ENCODE measurements at regions of chr17 and their contacts with region 1.

Region 1: DNA sequence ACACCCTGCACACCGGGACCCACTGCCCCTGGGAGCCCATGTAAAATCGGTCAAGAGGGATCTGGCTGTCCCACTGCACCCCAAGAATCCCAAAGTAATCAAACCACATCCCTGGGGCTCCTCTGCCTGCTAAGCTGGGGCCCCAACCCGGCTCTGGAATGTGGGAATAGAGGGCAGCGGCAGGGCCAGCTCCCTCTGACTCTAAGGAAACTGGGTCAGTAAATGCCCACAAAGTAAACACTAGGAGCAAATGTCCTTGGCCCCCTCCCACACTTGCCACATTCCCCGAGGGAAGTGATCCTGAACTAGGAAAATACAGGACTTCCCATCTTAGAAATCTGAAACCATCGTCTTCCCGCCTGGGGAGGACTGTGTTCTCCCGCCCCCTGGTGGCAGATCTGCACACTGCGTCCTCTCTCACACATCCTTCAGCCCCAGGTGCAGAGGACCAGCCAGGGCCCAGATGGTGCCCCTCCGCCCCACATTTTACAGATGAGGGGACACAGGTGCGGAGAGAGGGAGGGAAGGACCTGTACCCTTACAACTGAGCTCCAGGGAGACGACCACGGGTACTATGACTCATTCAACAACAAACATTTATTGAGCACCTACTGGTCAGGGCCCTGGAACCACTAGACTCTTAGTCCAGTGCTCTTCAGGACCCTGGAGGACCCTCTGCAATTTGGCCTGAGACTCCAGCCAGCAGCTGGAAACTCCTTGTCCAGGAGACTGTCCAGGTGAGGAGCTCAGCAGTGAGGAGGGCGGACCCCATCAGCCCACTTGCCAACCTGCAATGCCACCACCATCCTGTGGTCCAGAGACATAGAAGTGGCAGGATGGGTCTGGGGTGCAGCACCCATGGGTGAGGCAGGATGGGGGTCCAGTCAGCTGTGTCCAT is 10.1 kb downstream of the P3H4 start:
- DNase-seq: peak; percentile 80
- H3K4me3 Mint-ChIP-seq: no peak overlapping the region
- H3K27ac Mint-ChIP-seq: no peak overlapping the region
- H3K4me1 Mint-ChIP-seq: peaks cover 11% of the 10 kb centered on the region
- H3K27me3 Mint-ChIP-seq: peaks cover 14% of the 10 kb centered on the region

Region 2: DNA sequence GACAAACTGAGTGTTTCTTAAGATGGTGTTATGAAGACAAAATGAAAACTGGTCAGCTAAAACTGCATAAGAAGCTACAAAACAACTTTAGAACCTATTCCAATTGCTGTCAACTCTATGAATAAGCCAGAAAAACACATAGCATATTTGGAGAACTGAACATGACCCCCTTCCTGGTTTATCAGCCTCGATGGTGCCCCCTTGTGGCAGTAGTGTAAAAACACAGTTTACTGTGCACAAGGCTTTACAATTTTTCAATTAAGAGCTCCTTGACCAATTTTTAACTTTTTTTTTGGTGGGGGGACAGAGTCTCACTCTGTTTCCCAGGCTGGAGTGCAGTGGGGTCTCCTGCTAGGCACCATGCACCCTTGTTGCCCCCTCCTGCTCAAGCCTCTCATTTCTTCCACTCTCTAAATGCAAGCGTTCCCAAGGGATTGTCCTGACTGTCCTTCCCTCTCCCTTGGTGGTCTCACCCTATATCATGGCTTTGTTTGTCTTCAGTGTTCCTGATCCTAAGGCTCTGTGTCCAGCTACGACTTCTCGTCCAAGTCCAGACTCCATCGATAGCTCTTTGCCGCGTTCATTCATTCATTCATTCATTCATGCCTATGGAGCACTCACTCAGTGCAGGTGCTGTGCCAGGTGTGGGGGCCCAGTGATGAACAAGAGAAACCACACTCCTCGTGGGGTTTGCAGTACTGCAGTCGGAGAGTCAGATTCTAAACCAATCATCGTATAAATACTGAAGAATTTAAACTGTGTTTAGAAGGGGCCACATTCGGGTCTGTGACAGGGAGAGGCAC is 105.5 kb before region 1 on chr17:
- CTCF ChIA-PET with region 1: no interaction called
- DNase-seq: peak; percentile 86
- H3K4me3 Mint-ChIP-seq: no peak overlapping the region
- H3K27ac Mint-ChIP-seq: peak overlapping the region; percentile 81
- H3K4me1 Mint-ChIP-seq: peaks cover 29% of the 10 kb centered on the region
- H3K27me3 Mint-ChIP-seq: peaks cover 4% of the 10 kb centered on the region

Region 3: DNA sequence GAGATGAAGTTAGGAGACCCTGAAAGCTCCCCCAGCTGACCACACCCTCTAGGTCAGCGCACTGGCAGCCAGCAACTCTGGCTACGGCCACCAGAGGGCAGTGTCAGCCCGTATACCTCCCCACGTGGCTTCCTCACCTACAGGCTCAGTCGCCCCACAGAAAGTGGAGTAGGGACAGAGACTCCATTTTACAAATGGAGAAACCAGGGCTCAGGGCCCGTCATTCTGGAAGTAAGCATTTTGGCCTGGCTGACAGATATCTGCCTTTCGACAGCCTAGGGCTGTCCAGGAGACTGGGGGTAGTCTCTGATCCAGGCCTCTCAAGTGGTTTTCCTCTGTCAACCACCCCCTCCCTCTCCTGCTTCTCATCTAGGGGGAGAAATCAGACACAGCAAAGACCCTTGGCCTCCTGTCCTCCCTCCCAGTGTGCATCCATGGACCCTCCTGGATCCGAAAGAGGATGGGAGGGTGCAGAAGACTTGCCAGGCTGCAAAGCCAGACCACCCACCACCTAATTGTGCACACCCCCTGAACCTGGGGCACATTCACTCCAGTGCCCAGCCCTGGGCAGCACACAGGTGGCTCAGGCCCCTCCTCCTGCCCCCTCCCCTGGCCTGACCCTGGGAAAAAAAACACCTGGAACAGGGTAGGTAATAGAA is 63.4 kb before region 1 on chr17:
- CTCF ChIA-PET with region 1: interaction called, 55 read pairs
- DNase-seq: peak; percentile 86
- H3K4me3 Mint-ChIP-seq: no peak overlapping the region
- H3K27ac Mint-ChIP-seq: peak overlapping the region; percentile 56
- H3K4me1 Mint-ChIP-seq: peaks cover 8% of the 10 kb centered on the region
- H3K27me3 Mint-ChIP-seq: peaks cover 52% of the 10 kb centered on the region

Region 4: GRCh38 chr17:41786227-41787020 is 15.2 kb before region 1 on chr17 and contains the start of gene JUP:
- CTCF ChIA-PET with region 1: interaction called, 27 read pairs
- DNase-seq: peak; percentile 92
- H3K4me3 Mint-ChIP-seq: peak within 1 kb of the TSS; percentile 59
- H3K27ac Mint-ChIP-seq: no peak within 1 kb of the TSS
- H3K4me1 Mint-ChIP-seq: peaks cover 30% of the 10 kb centered on the region
- H3K27me3 Mint-ChIP-seq: peaks cover 93% of the 10 kb centered on the region

Region 5: DNA sequence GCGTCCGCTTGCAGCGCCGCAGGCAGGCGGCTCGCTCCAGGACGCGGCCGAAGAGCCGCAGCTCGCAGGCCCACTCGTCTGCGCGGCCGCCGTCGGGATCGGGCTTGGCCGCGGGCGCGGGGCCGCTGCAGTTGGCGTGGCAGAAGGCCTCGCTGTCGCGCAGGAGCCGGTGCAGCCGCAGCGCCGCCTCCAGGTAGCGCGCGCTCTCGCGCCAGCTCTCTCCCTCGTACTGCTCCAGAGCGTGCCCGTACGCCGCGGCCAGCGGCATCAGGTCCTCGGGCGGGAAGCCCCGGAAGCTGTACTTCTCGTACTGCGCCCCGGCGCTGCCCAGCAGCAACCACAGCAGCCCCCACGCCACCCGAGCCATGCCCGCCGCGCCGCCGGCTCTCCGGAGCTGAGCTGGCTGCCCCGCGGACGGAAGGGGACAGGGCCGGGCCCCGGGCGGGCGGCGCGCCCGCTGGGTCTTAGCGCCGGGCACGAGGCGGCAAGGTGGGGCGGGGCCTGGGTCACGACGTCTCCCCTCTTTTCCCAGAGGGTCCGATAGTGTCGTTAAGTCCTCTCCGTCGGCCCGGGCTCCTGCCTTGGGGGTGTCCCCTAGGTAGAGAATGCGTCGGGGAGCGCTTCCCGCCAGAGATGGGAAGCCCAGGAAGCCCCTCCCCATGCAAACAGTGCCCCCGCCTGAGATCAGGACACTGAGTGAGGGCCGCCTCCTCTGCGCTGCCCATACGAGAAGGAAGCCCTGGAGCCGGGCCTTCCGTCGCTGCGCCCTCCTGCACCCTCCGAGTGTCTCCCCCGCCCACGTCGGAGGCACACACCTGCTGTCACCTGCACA is 10.1 kb after region 1 on chr17 and contains the start of gene P3H4:
- CTCF ChIA-PET with region 1: interaction called, 11 read pairs
- DNase-seq: peak; percentile 83
- H3K4me3 Mint-ChIP-seq: peak within 1 kb of the TSS; percentile 77
- H3K27ac Mint-ChIP-seq: peak within 1 kb of the TSS; percentile 79
- H3K4me1 Mint-ChIP-seq: peaks cover 17% of the 10 kb centered on the region
- H3K27me3 Mint-ChIP-seq: peaks cover 50% of the 10 kb centered on the region

Region 6: DNA sequence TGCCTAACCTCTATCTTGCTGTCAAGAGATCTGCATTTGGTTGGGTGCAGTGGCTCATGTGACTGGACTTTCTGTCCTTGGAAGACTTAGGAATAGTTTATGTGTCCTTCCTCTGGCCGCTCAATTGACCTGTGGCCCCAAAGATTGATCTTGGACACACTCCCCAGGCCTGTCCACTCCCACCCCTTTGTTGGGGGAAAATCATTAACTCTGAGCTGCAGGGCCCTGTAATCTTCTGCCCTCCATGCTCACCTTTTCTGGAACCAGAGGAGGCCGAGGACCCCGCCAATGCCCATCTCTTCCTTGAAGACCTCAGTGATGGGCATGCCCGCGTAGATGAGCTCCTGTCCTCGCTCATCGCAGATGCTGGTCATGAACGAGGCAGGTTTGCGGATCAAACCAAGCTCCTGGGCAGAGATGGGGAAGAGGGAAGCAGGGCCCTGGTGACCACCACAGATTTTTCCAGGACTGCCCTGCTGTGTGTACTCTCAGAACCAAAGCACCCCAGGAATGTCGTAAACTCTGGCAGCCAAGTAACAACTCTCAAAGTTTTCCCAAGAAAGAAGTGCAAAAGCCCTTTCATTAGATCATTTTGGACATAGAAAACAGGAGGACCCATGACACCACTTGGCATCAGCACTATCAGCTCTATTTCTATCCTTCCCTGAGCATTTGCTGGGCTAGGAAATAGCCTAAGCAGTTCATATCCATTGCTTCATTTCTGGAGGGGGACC is 72.1 kb after region 1 on chr17:
- CTCF ChIA-PET with region 1: no interaction called
- DNase-seq: no peak
- H3K4me3 Mint-ChIP-seq: no peak overlapping the region
- H3K27ac Mint-ChIP-seq: no peak overlapping the region
- H3K4me1 Mint-ChIP-seq: peaks cover 11% of the 10 kb centered on the region
- H3K27me3 Mint-ChIP-seq: no peaks in the 10 kb centered on the region